Activated CD8-positive, alpha-beta T cell treated with anti-CD3 and anti-CD28 coated beads, Interleukin-2, amount 10 ng/mL, durations not matched to agents 7 days and 5 days (primary cell): ENCODE measurements at regions of chr19 and their contacts with region 1.

Region 1: DNA sequence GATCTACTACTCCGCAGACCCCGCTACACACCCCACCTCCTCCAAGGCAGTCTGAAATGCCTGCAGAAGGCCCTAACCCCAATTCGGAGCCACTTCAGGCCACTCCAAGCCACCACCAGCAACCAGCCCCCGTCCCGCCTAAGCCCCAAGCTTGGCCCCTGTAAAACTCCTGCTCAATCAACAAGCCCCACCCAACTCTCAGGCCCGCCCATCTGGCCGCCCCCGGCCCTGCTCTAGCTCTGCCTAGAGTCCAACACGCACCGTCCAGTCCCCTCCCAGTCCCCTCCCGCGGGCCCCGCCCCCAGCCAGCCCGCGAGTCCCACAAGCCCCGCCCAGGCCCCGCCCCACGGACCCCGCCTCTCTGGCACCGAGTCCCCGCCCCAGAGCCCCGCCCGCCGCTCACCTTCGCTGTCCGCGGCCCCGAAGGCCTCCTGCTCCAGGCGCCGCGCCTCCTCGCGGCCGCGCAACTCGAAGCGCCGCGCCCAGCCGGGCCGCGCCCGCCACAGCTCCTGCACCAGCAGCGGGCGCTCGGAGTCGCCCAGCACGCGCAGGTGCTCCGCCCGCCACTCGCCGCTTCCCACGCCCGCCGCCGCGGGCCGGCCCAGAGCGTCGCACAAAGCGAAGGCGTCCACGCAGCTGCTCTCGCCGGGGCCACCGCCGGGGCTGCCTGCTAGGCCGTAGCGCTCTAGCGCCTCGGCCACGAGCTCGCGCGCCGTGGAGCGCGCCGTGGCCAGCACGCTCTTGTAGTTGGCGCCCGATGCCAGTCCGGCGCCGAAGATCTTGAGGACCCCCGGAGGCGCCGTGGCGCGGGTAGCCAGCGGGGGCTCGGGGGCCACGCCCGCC is 1.6 kb downstream of the RASIP1 start:
- DNase-seq: peak; percentile 94
- ATAC-seq: peak; percentile 98
- H3K4me3 Mint-ChIP-seq: peak overlapping the region; percentile 34
- H3K27ac Mint-ChIP-seq: no peak overlapping the region
- H3K4me1 Mint-ChIP-seq: peaks cover 29% of the 10 kb centered on the region
- H3K27me3 Mint-ChIP-seq: peaks cover 14% of the 10 kb centered on the region

Region 2: DNA sequence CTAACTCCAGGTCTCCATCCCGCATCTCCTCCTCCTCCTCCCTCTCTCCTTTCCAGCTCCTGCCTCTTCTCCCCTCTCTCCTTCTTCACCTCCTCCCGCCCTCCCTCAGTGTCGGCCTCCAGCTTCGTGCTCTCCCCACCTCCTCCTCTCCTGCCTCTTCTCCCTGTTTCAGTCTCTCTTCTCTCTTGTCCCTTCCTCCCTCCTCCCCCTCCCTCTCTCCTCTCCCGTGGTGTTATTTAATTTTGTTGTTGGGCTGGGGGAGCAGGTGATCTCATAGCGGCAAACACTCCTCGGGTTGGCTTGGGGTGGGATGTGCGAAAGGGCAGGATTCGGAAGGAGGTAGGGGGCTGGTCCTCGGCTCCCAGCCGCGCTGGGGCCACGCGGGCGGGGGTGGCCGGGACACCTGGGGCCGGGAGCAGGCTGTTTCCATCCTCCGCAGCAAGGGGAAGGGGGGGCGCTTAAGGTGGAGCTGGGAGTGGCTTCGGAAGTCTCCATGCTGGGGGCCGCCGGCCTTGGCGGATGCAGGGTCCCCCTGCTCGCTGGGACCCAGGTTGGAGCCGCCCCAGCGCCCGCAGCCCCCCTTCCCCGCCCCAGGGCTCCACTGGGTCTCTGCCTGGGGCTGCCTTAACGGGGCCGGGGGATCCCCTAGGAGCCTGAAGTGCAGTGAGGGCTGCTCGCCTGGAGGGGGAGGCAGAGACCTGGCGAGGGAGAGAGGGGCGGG is 92.6 kb before region 1 on chr19 and contains the start of gene CA11:
- CTCF ChIA-PET with region 1: interaction called, 18 read pairs
- POLR2A ChIA-PET with region 1: no interaction called
- DNase-seq: peak; percentile 93
- ATAC-seq: peak; percentile 90
- H3K4me3 Mint-ChIP-seq: peak within 1 kb of the TSS; percentile 79
- H3K27ac Mint-ChIP-seq: peak within 1 kb of the TSS; percentile 76
- H3K4me1 Mint-ChIP-seq: peaks cover 46% of the 10 kb centered on the region
- H3K27me3 Mint-ChIP-seq: no peaks in the 10 kb centered on the region
- total RNA-seq, gene CA11: 5.2 to 6.3 TPM

Region 3: GRCh38 chr19:48674921-48675824 is 63.6 kb before region 1 on chr19:
- CTCF ChIA-PET with region 1: interaction called, 15 read pairs
- POLR2A ChIA-PET with region 1: no interaction called
- DNase-seq: peak; percentile 84
- ATAC-seq: peak; percentile 94
- H3K4me3 Mint-ChIP-seq: no peak overlapping the region
- H3K27ac Mint-ChIP-seq: no peak overlapping the region
- H3K4me1 Mint-ChIP-seq: peaks cover 6% of the 10 kb centered on the region
- H3K27me3 Mint-ChIP-seq: no peaks in the 10 kb centered on the region

Region 4: DNA sequence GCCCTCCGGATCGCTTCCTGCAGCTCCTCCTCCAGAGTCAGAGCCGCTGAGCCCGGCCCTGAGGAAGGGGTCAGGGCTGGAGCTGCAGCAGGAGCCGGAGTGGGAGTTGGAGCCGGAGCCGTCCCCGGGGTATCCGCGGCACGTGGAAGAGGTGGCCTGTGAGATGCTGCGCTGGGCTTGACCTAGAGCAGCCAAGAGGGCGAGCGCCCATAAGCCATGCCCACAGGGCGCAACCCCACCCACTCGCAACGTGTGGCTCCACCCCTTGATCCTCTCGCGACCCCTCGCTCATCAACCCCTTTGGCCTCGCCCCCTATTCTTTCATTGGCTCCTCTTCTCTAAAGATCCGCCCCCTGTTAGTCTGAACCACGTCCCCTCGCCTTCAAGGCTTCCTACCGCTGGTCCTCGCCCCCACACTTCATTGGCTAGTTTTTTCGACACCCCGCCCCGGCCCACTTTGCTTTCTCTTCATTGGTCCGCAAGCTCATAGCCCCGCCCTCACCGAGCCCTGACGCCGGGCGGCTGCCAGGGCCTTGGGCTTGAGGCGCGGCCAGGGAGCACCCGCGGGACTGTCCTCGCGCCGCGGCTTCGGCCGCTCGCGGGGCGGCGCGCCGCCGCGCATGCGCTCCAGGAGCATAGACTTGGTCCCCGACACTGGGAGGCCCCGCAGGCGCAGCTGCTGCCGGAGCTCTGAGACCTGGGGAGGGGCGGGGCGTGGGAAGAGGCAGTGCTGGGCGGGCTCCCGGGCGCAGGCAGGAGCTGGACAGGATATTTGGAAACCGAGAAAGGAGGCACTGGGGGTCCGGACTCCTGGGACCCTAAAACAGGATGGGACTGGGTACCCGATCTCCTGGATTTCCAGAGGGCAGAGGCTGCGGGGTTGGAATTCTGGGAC is 24.7 kb before region 1 on chr19:
- CTCF ChIA-PET with region 1: interaction called, 13 read pairs
- POLR2A ChIA-PET with region 1: interaction called, 3 read pairs
- DNase-seq: peak; percentile 99
- ATAC-seq: peak; percentile 95
- H3K4me3 Mint-ChIP-seq: peak overlapping the region; percentile 89
- H3K27ac Mint-ChIP-seq: peak overlapping the region; percentile 87
- H3K4me1 Mint-ChIP-seq: peaks cover 19% of the 10 kb centered on the region
- H3K27me3 Mint-ChIP-seq: peaks cover 2% of the 10 kb centered on the region

Region 5: GRCh38 chr19:48724796-48725753 is 13.7 kb before region 1 on chr19:
- CTCF ChIA-PET with region 1: interaction called, 15 read pairs
- POLR2A ChIA-PET with region 1: interaction called, 6 read pairs
- DNase-seq: peak; percentile 63
- ATAC-seq: peak; percentile 28
- H3K4me3 Mint-ChIP-seq: peak overlapping the region; percentile 13
- H3K27ac Mint-ChIP-seq: peak overlapping the region; percentile 97
- H3K4me1 Mint-ChIP-seq: peaks cover 39% of the 10 kb centered on the region
- H3K27me3 Mint-ChIP-seq: no peaks in the 10 kb centered on the region

Region 6: GRCh38 chr19:48835734-48836088 is 96.9 kb after region 1 on chr19:
- CTCF ChIA-PET with region 1: no interaction called
- POLR2A ChIA-PET with region 1: no interaction called
- DNase-seq: peak; percentile 97
- ATAC-seq: peak; percentile 95
- H3K4me3 Mint-ChIP-seq: peak overlapping the region; percentile 70
- H3K27ac Mint-ChIP-seq: peak overlapping the region; percentile 83
- H3K4me1 Mint-ChIP-seq: peaks cover 21% of the 10 kb centered on the region
- H3K27me3 Mint-ChIP-seq: no peaks in the 10 kb centered on the region